MCF 10A (cell line): ENCODE measurements at regions of chrX and their contacts with region 1.

Region 1: GRCh38 chrX:10119399-10119990 is 37.3 kb upstream of the CLCN4 start:
- DNase-seq: peak; percentile 80
- H3K4me3 Mint-ChIP-seq: no peak overlapping the region
- H3K27ac Mint-ChIP-seq: no peak overlapping the region
- H3K4me1 Mint-ChIP-seq: no peaks in the 10 kb centered on the region
- H3K27me3 Mint-ChIP-seq: no peaks in the 10 kb centered on the region
- CTCF ChIP-seq: peak; percentile 100

Region 2: GRCh38 chrX:8743126-8743732 is 1376.3 kb before region 1 on chrX:
- CTCF ChIA-PET with region 1: no interaction called
- POLR2A ChIA-PET with region 1: no interaction called
- intact Hi-C with region 1: loop called (anchors 1 kb)
- DNase-seq: peak; percentile 72
- H3K4me3 Mint-ChIP-seq: no peak overlapping the region
- H3K27ac Mint-ChIP-seq: no peak overlapping the region
- H3K4me1 Mint-ChIP-seq: no peaks in the 10 kb centered on the region
- H3K27me3 Mint-ChIP-seq: no peaks in the 10 kb centered on the region
- CTCF ChIP-seq: peak; percentile 64

Region 3: DNA sequence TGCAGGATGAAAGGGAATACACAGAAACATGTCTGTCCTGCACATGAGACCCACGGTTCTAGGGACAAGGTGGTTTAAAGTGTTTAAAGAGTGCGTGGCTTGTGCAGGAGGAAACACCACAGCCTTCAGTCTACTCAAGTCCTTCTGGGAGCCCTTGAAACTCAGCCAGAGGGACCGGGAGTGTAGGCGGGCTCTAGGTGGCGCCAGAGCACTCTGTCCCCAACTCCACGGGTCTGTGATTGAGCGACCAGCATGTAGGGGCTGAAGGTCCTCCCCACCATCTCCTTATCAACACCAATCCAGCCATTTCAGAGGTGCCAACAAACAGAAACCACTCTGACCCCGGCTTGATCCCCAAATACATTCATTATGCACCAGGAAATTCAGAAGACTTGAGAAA is 234.3 kb before region 1 on chrX:
- CTCF ChIA-PET with region 1: interaction called, 16 read pairs
- POLR2A ChIA-PET with region 1: no interaction called
- intact Hi-C with region 1: loop called (anchors 1 kb)
- DNase-seq: peak; percentile 78
- H3K4me3 Mint-ChIP-seq: no peak overlapping the region
- H3K27ac Mint-ChIP-seq: no peak overlapping the region
- H3K4me1 Mint-ChIP-seq: peaks cover 11% of the 10 kb centered on the region
- H3K27me3 Mint-ChIP-seq: no peaks in the 10 kb centered on the region
- CTCF ChIP-seq: peak; percentile 70

Region 4: GRCh38 chrX:9988762-9989161 is 130.7 kb before region 1 on chrX:
- CTCF ChIA-PET with region 1: interaction called, 178 read pairs
- POLR2A ChIA-PET with region 1: interaction called, 3 read pairs
- intact Hi-C with region 1: loop called (anchors 1 kb)
- DNase-seq: peak; percentile 54
- H3K4me3 Mint-ChIP-seq: no peak overlapping the region
- H3K27ac Mint-ChIP-seq: no peak overlapping the region
- H3K4me1 Mint-ChIP-seq: no peaks in the 10 kb centered on the region
- H3K27me3 Mint-ChIP-seq: peaks cover 11% of the 10 kb centered on the region
- CTCF ChIP-seq: peak; percentile 70

Region 5: GRCh38 chrX:10014462-10015356 is 104.8 kb before region 1 on chrX:
- CTCF ChIA-PET with region 1: interaction called, 18 read pairs
- POLR2A ChIA-PET with region 1: interaction called, 3 read pairs
- intact Hi-C with region 1: no loop called
- DNase-seq: peak; percentile 77
- H3K4me3 Mint-ChIP-seq: peak overlapping the region; percentile 69
- H3K27ac Mint-ChIP-seq: peak overlapping the region; percentile 9
- H3K4me1 Mint-ChIP-seq: peaks cover 40% of the 10 kb centered on the region
- H3K27me3 Mint-ChIP-seq: no peaks in the 10 kb centered on the region
- CTCF ChIP-seq: no peak

Region 6: DNA sequence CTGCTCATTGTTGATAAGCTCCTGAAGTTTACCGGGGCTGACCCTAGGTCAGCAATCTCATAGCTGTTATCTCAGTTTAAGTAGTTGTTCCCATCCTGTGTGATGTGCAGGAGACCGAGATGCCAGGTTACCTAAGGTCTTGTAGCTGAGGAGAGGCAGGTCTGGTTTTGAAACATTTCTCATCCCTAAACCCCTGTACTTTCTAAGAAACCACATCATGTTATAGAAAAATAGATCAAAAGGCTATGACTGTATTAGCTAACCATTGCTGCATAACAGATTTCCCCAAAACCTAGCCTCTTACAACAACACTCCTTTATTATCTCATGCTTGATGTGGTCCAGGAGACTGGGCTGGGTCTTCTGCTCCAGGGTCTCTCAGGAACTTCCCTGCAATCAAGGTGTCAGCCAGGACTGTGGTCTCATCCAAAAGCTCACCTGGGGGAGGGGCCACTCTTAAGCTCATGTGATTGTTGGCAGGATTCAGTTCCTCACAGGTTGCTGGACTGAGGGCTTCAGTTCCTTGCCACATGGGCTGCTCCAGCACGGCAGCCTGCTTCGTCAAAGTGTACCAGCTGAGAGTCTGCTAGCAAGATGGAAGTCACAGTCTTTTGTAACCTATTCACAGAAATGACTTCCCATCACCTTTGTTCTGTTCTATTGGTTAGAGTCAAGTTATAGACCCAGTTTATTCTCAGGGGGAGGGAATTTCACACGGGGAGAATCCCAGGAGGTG is 23.6 kb before region 1 on chrX:
- CTCF ChIA-PET with region 1: interaction called, 28 read pairs
- POLR2A ChIA-PET with region 1: no interaction called
- intact Hi-C with region 1: no loop called
- DNase-seq: no peak
- H3K4me3 Mint-ChIP-seq: no peak overlapping the region
- H3K27ac Mint-ChIP-seq: no peak overlapping the region
- H3K4me1 Mint-ChIP-seq: no peaks in the 10 kb centered on the region
- H3K27me3 Mint-ChIP-seq: no peaks in the 10 kb centered on the region
- CTCF ChIP-seq: no peak

Region 7: DNA sequence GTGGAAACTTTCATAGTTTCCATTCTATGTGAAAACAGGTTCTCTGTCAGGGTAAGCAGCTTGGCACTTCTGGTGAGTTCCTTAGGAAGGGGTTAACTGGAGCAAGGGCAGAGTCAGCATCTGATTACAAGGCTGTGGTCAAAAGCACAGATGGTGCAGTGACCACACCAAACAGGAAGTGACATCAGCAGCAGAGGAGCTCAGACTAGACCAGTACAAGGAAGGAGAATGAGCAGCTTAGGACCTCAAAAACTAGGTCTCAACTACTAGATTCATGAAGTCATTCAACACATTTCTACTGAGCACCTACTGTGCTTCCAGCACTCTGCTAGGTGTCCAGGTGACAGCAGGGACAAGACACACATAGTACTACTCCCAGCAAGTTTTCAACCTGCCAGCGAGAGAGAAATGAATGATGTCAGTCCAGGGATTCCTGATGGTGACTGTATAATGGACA is 1303.9 kb after region 1 on chrX:
- CTCF ChIA-PET with region 1: no interaction called
- POLR2A ChIA-PET with region 1: no interaction called
- intact Hi-C with region 1: no loop called
- DNase-seq: peak; percentile 30
- H3K4me3 Mint-ChIP-seq: no peak overlapping the region
- H3K27ac Mint-ChIP-seq: no peak overlapping the region
- H3K4me1 Mint-ChIP-seq: peaks cover 4% of the 10 kb centered on the region
- H3K27me3 Mint-ChIP-seq: peaks cover 18% of the 10 kb centered on the region
- CTCF ChIP-seq: no peak